ENCODE measurements at regions of chr17 and their contacts with region 1.

Region 1: GRCh38 chr17:64129764-64130558 is at the start of gene ERN1:
- DNase-seq: peak; percentile 93
- H3K4me3 ChIP-seq: peak within 1 kb of the TSS; percentile 69 to 78 (median 73)
- H3K27ac ChIP-seq: peak within 1 kb of the TSS; percentile 68
- H3K4me1 ChIP-seq: peaks cover 22% of the 10 kb centered on the region
- H3K27me3 ChIP-seq: no peaks in the 10 kb centered on the region
- CTCF ChIP-seq: no peak
- total RNA-seq, gene ERN1: 18.8 to 36.8 TPM

Region 2: DNA sequence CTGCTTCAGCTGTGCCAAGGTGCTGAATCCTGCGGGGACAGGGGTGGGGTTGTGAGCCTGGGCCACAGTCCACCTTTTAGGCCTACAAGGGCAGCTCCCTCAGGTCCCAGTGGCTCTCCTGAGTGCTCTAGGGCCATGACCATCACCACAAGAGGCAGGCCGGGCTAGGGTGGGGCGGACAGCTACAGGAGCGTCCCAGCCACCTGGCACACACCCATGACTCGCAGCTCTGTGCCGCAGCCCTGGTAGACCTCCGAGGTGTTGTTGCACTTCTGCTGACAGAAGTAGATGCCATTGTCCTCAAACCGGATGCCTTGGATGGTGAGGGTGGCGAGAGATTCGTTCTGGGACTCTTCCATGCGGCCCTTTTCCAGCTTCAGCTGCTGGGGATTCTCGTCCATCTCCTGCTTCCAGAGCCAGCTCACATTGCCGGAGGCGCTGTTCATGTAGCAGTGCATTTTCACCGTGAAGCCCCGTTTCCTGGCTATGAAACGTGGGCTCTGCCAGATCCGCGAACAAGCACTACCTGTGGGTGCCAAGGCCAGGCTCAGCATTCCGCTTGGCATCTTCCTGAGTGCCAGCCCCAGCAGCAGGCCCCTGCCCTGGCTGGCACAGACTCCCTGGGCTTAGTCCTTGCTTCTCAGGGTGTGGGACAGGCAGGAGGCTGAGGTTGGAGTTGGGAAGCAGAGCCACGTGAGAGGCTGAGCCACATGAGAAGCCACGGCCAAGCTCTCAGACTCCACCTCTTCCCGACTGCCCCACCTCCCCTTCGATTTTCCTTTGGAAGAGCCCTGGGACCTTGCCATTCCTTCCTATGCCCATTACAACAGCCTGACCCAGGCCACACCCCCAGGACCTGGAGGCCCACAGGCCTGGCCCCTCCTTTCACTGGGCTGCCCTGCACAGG is 199.8 kb before region 1 on chr17:
- CTCF ChIA-PET with region 1: no interaction called
- dilution Hi-C with region 1: no loop called
- in situ Hi-C with region 1: loop called in 1 of 2 experiments (anchors 10 kb)
- intact Hi-C with region 1: no loop called
- DNase-seq: no peak
- H3K4me3 ChIP-seq: no peak overlapping the region
- H3K27ac ChIP-seq: no peak overlapping the region
- H3K4me1 ChIP-seq: peaks cover 18% of the 10 kb centered on the region
- H3K27me3 ChIP-seq: no peaks in the 10 kb centered on the region
- CTCF ChIP-seq: no peak

Region 3: DNA sequence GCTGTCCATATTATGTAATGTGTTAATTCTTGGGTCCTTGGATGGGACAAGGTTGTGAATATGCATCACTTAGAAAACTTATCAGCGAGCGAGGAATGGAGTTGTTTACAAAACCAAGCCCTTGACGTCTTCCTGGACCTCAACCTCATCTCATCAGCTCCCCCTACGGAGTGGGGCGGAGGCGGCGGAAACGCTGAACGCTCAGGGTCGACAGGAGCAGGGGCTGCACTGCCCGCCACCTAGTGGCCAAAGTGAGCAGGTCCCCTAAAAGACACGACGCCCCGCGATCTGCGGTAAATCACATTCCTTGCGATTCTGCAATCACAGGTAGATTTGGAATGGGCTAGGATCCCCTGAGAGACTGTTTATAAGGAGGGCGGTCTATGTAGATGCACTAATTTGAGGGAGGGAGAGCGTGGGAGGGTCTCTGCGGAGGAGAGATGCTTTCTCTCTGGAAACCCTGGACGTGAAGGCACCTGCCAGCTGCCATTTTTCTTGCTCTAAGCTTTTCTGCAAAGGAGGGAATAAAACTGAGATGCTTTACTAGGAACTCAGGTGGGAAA is 104.1 kb before region 1 on chr17:
- CTCF ChIA-PET with region 1: interaction called, 62 read pairs
- dilution Hi-C with region 1: loop called (anchors 5 kb)
- in situ Hi-C with region 1: loop called (anchors 5 kb)
- intact Hi-C with region 1: loop called (anchors 1 kb)
- DNase-seq: peak; percentile 51
- H3K4me3 ChIP-seq: peak overlapping the region in 1 of 3 experiments; percentile 15
- H3K27ac ChIP-seq: no peak overlapping the region
- H3K4me1 ChIP-seq: no peaks in the 10 kb centered on the region
- H3K27me3 ChIP-seq: no peaks in the 10 kb centered on the region
- CTCF ChIP-seq: peak; percentile 91 to 93

Region 4: GRCh38 chr17:64063766-64064224 is 66.2 kb before region 1 on chr17:
- CTCF ChIA-PET with region 1: no interaction called
- dilution Hi-C with region 1: no loop called
- in situ Hi-C with region 1: no loop called
- intact Hi-C with region 1: loop called (anchors 1 kb)
- DNase-seq: no peak
- H3K4me3 ChIP-seq: no peak overlapping the region
- H3K27ac ChIP-seq: no peak overlapping the region
- H3K4me1 ChIP-seq: peaks cover 6% of the 10 kb centered on the region
- H3K27me3 ChIP-seq: no peaks in the 10 kb centered on the region
- CTCF ChIP-seq: peak; percentile 20 to 33

Region 5: GRCh38 chr17:64073771-64074703 is 55.9 kb before region 1 on chr17:
- CTCF ChIA-PET with region 1: no interaction called
- dilution Hi-C with region 1: no loop called
- in situ Hi-C with region 1: no loop called
- intact Hi-C with region 1: no loop called
- DNase-seq: no peak
- H3K4me3 ChIP-seq: no peak overlapping the region
- H3K27ac ChIP-seq: no peak overlapping the region
- H3K4me1 ChIP-seq: peaks cover 3% of the 10 kb centered on the region
- H3K27me3 ChIP-seq: no peaks in the 10 kb centered on the region
- CTCF ChIP-seq: no peak

Region 6: DNA sequence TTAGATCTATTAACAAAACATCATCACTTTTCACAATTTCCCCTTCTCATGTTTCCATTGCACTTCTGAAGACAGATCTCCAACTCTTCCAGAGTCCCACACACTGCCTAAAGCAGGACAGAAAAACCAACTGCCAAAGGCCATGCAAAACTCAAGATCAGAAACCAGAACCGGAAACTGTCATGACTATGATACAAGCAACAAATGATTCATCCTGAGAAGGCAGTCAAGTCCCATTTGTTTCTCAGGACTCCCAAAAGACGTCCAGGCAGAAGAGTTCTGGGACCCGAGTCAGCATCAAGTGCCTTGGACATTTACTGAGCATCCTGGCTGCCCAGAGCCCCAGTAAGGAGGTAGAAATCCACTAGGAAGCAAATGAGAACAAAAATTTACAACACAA is 38.8 kb before region 1 on chr17:
- CTCF ChIA-PET with region 1: no interaction called
- dilution Hi-C with region 1: no loop called
- in situ Hi-C with region 1: no loop called
- intact Hi-C with region 1: no loop called
- DNase-seq: peak; percentile 57
- H3K4me3 ChIP-seq: no peak overlapping the region
- H3K27ac ChIP-seq: no peak overlapping the region
- H3K4me1 ChIP-seq: peaks cover 18% of the 10 kb centered on the region
- H3K27me3 ChIP-seq: no peaks in the 10 kb centered on the region
- CTCF ChIP-seq: no peak

Region 7: GRCh38 chr17:64145757-64146417 is 15.9 kb after region 1 on chr17:
- CTCF ChIA-PET with region 1: no interaction called
- dilution Hi-C with region 1: no loop called
- in situ Hi-C with region 1: no loop called
- intact Hi-C with region 1: loop called (anchors 1 kb)
- DNase-seq: peak; percentile 98
- H3K4me3 ChIP-seq: peak overlapping the region; percentile 76 to 89 (median 79)
- H3K27ac ChIP-seq: peak overlapping the region; percentile 76
- H3K4me1 ChIP-seq: peaks cover 8% of the 10 kb centered on the region
- H3K27me3 ChIP-seq: no peaks in the 10 kb centered on the region
- CTCF ChIP-seq: no peak